HepG2 (cell line): ENCODE measurements at regions of chr9 and their contacts with region 1.

Region 1: GRCh38 chr9:35646533-35647265 is 4.0 kb downstream of the SIT1 start:
- DNase-seq: peak; percentile 78
- ATAC-seq: peak; percentile 95
- H3K4me3 ChIP-seq: peak overlapping the region; percentile 70 to 83 (median 72)
- H3K27ac ChIP-seq: peak overlapping the region; percentile 67
- H3K4me1 ChIP-seq: peaks cover 55% of the 10 kb centered on the region
- H3K27me3 ChIP-seq: peaks cover 2 to 22% of the 10 kb centered on the region in 2 experiments; a peak in 3 of 5 replicates
- CTCF ChIP-seq: peak; percentile 98
- EP300 ChIP-seq: no peak
- POLR2A ChIP-seq: peak; percentile 64 to 81
- RAD21 ChIP-seq: peak; percentile 93

Region 2: GRCh38 chr9:34252670-34253459 is 1393.8 kb before region 1 on chr9:
- CTCF ChIA-PET with region 1: no interaction called
- POLR2A ChIA-PET with region 1: no interaction called
- in situ Hi-C with region 1: no loop called
- intact Hi-C with region 1: no loop called
- DNase-seq: peak; percentile 50
- ATAC-seq: peak; percentile 72
- H3K4me3 ChIP-seq: no peak overlapping the region
- H3K27ac ChIP-seq: no peak overlapping the region
- H3K4me1 ChIP-seq: no peaks in the 10 kb centered on the region
- H3K27me3 ChIP-seq: no peaks in the 10 kb centered on the region
- CTCF ChIP-seq: peak; percentile 81
- EP300 ChIP-seq: no peak
- POLR2A ChIP-seq: no peak
- RAD21 ChIP-seq: peak; percentile 67

Region 3: DNA sequence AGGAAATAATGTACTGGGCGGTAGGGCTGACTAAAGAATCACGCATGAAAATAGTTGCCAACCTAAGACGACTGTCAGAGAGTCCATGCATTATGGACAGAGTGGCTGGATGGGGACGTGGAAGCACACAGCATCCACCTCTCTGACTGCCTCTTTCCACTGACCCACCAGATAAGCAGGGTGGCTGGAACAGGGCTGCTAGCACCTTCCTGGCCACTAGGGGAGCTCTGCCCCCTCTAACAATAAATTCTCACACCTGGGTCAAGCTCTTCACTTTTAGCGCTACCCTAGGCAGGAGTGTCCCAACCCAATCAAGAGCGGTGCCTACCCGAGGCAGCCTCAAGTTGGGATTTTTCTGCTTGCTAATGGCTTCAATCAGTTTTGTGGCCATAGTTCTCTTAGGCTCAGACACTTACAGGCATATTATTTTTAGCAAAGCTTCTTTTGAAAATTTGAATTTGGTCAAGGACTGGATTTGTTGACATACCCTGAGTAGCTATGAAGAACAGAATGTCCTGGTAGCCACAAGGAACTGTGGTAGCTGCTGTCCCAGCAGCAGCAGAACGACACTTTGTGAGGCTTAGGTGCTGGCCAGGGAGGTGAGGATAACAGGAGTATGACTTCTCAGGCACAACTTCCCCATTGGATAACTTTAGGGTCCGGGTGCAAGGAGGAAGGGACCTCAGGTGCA is 50.0 kb after region 1 on chr9:
- CTCF ChIA-PET with region 1: no interaction called
- POLR2A ChIA-PET with region 1: interaction called, 9 read pairs
- in situ Hi-C with region 1: no loop called
- intact Hi-C with region 1: loop called (anchors 10 kb)
- DNase-seq: peak; percentile 59
- ATAC-seq: peak; percentile 92
- H3K4me3 ChIP-seq: no peak overlapping the region
- H3K27ac ChIP-seq: no peak overlapping the region
- H3K4me1 ChIP-seq: peaks cover 19% of the 10 kb centered on the region
- H3K27me3 ChIP-seq: no peaks in the 10 kb centered on the region
- CTCF ChIP-seq: peak; percentile 82
- EP300 ChIP-seq: no peak
- POLR2A ChIP-seq: peak in 1 of 2 experiments; percentile 24; a peak in 1 of 4 replicates
- RAD21 ChIP-seq: peak; percentile 71